CD4-positive, alpha-beta memory T cell (primary cell): ENCODE measurements at regions of chr3 and their contacts with region 1.

Region 1: GRCh38 chr3:53219895-53220483 is 35.8 kb downstream of the TKT start:
- DNase-seq: peak; percentile 65 to 71 (median 67)
- H3K4me3 ChIP-seq: no peak overlapping the region
- H3K4me3 Mint-ChIP-seq: no peak overlapping the region
- H3K27ac ChIP-seq: no peak overlapping the region
- H3K27ac Mint-ChIP-seq: peak overlapping the region in 2 of 7 donors; percentile 17 to 24
- H3K4me1 ChIP-seq: no peaks in the 10 kb centered on the region
- H3K4me1 Mint-ChIP-seq: peaks cover 3 to 6% (median 5%) of the 10 kb centered on the region in 4 donors
- H3K27me3 ChIP-seq: no peaks in the 10 kb centered on the region
- H3K27me3 Mint-ChIP-seq: no peaks in the 10 kb centered on the region

Region 2: GRCh38 chr3:53195602-53196574 is 24.1 kb before region 1 on chr3:
- CTCF ChIA-PET with region 1: no interaction called
- POLR2A ChIA-PET with region 1: no interaction called
- intact Hi-C with region 1: no loop called
- DNase-seq: peak; percentile 43 to 63 (median 49)
- H3K4me3 ChIP-seq: no peak overlapping the region
- H3K4me3 Mint-ChIP-seq: peak overlapping the region in 1 of 8 donors; percentile 18
- H3K27ac ChIP-seq: no peak overlapping the region
- H3K27ac Mint-ChIP-seq: peak overlapping the region in 2 of 7 donors; percentile 53 to 73
- H3K4me1 ChIP-seq: peaks cover 8% of the 10 kb centered on the region
- H3K4me1 Mint-ChIP-seq: peaks cover 2 to 9% (median 6%) of the 10 kb centered on the region in 4 donors
- H3K27me3 ChIP-seq: no peaks in the 10 kb centered on the region
- H3K27me3 Mint-ChIP-seq: peaks cover 0 to 5% of the 10 kb centered on the region in 2 donors

Region 3: DNA sequence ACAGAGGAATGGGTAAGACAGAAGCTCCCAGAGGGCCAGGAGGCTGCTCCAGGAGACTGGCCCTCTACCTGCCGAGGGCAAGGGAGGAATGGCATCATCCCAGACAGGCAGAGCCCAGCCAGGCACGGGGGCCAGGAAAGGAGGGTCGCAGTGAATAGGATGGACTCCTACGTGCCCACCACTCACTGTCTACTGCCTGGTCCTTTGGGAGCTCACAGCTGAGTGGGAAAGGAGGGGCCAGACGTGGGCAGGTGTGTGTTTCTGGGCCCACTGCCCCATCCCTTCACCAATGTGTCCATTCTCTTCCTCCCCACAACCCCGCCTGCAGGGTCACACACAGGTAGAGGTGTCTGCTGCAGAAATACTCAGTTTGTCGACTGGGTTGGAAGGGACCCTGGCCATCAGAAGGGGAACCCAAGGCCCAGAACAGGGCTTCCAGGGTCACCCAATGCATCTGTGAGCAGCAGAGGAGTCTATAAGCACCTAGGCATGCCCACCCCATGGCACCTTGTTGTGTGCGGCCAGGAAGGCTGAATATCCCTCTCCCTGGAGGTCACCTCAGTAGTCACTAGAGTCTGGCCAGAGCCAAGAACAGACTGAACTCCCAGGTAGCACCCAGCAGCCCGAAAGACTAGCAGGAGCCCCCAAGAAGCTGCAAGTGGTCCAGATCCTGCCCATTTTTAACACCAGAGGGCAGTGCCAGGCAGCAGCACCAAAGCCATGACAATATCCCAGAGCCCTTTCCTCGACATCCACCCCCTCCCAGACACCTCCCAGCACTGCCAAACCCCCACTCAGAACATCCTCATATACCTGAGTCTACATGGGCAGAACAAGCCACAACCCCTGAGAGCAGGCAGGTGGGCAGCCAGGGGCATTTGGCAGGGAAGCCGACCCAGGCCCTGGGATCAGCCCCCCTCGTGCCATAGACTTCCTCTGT is 11.9 kb after region 1 on chr3:
- CTCF ChIA-PET with region 1: interaction called, 16 read pairs
- POLR2A ChIA-PET with region 1: no interaction called
- intact Hi-C with region 1: no loop called
- DNase-seq: no peak
- H3K4me3 ChIP-seq: no peak overlapping the region
- H3K4me3 Mint-ChIP-seq: no peak overlapping the region
- H3K27ac ChIP-seq: no peak overlapping the region
- H3K27ac Mint-ChIP-seq: peak overlapping the region in 3 of 7 donors; percentile 37 to 83 (median 70)
- H3K4me1 ChIP-seq: no peaks in the 10 kb centered on the region
- H3K4me1 Mint-ChIP-seq: peaks cover 0 to 3% (median under 1%) of the 10 kb centered on the region in 4 donors
- H3K27me3 ChIP-seq: no peaks in the 10 kb centered on the region
- H3K27me3 Mint-ChIP-seq: no peaks in the 10 kb centered on the region

Region 4: GRCh38 chr3:53303957-53304356 is 84.0 kb after region 1 on chr3:
- CTCF ChIA-PET with region 1: interaction called, 3 read pairs
- POLR2A ChIA-PET with region 1: no interaction called
- intact Hi-C with region 1: loop called (anchors 1 kb)
- DNase-seq: no peak
- H3K4me3 ChIP-seq: no peak overlapping the region
- H3K4me3 Mint-ChIP-seq: no peak overlapping the region
- H3K27ac ChIP-seq: no peak overlapping the region
- H3K27ac Mint-ChIP-seq: peak overlapping the region in 3 of 7 donors; percentile 25 to 79 (median 53)
- H3K4me1 ChIP-seq: no peaks in the 10 kb centered on the region
- H3K4me1 Mint-ChIP-seq: peaks cover 0 to 4% (median 2%) of the 10 kb centered on the region in 4 donors
- H3K27me3 ChIP-seq: no peaks in the 10 kb centered on the region
- H3K27me3 Mint-ChIP-seq: no peaks in the 10 kb centered on the region

Region 5: DNA sequence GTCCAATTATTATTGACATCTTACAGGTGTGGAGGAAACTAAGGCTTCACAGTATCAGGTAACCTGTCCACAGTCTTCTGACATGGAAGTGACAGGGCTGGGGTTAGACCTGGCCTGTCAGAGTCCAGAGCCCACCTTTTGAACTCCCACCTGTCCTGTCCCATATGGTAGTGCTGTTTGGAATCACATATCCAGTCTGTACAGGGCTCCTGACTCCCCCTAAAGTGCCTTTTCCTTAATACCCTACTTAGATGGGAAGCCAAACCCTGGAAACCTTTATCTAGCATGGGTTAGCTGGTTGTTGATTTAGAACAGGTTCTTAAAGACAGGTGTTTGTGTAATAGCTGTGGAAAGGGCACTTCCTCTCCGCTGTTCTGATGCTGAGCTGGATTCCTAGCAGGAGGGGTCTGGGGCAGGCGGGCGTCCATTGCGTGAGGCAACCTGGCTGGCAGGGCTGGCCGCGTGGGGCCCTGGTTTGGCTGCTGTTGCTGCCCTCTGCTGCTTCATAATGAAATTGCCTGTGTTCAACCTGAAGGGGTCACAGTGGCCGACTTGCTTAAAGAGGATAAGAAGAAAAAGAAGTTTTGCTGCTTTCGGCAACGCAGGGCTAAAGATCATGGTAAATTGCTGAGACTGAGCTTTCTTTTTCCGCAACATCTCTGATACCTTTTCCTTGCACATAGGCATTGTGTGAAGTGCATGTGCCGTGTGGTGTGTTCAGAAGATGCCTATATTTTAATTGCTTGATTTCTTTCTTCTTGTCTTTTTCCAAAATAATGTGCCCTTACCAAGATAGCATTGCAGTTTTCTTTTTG is 490.1 kb after region 1 on chr3:
- CTCF ChIA-PET with region 1: interaction called, 28 read pairs
- POLR2A ChIA-PET with region 1: no interaction called
- intact Hi-C with region 1: no loop called
- DNase-seq: peak; percentile 29 to 53 (median 41)
- H3K4me3 ChIP-seq: no peak overlapping the region
- H3K4me3 Mint-ChIP-seq: no peak overlapping the region
- H3K27ac ChIP-seq: no peak overlapping the region
- H3K27ac Mint-ChIP-seq: no peak overlapping the region
- H3K4me1 ChIP-seq: peaks cover 4% of the 10 kb centered on the region
- H3K4me1 Mint-ChIP-seq: peaks cover 0 to 5% (median under 1%) of the 10 kb centered on the region in 4 donors
- H3K27me3 ChIP-seq: no peaks in the 10 kb centered on the region
- H3K27me3 Mint-ChIP-seq: no peaks in the 10 kb centered on the region